ENCODE measurements at regions of chr10 and their contacts with region 1.

Region 1: DNA sequence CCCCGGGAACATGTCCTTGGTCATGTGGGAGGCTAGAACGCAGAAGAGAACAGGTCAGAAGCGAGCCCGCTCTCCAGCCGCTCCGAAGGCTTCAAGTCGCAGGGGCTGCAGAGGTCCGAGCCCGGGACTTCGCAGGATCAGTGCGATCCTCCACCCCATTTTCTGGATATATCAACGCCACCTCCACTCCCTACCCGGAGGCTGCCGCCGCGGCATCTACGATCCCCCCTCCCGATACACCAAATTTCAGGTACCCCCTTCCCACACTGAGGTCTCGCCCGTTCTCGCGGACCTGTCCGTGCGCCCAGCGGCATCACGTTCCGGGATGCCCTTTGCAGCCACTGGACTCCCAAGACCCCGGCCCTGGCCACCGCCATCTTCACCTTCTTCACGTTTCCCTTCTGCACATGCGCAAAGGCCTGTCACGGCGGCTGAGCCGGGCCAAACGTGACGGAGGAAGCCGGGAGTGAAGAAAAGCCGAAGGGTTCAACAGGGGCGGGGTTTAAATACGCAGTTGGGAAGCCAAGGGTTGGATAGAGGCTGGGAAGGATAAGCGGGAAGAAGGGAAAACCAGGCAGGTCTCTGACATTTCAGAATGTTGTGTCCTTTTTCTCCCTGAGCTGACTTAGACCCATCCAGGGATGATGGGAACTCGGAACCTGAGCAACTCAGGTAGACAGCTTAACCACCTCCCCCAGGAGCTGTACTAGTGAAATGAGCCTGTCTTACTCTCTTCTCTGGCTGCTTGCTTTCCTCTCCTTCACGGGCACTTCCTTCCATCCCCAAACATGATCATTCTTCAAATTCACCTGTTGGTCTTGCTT is at the start of gene NDUFB8:
- DNase-seq: peak; percentile 92
- ATAC-seq: peak; percentile 72
- H3K4me3 Mint-ChIP-seq: peak within 1 kb of the TSS; percentile 85
- H3K27ac Mint-ChIP-seq: peak within 1 kb of the TSS; percentile 95
- H3K4me1 Mint-ChIP-seq: peaks cover 32% of the 10 kb centered on the region
- H3K27me3 Mint-ChIP-seq: no peaks in the 10 kb centered on the region
- CTCF ChIP-seq: no peak
- total RNA-seq, gene NDUFB8: 365 to 384 TPM

Region 2: GRCh38 chr10:99659031-99659867 is 870.4 kb before region 1 on chr10 and contains the start of gene ENTPD7:
- CTCF ChIA-PET with region 1: no interaction called
- POLR2A ChIA-PET with region 1: no interaction called
- intact Hi-C with region 1: loop called (anchors 10 kb)
- DNase-seq: peak; percentile 96
- ATAC-seq: peak; percentile 99
- H3K4me3 Mint-ChIP-seq: peak within 1 kb of the TSS; percentile 84
- H3K27ac Mint-ChIP-seq: peak within 1 kb of the TSS; percentile 83
- H3K4me1 Mint-ChIP-seq: peaks cover 21% of the 10 kb centered on the region
- H3K27me3 Mint-ChIP-seq: peaks cover 8% of the 10 kb centered on the region
- CTCF ChIP-seq: peak; percentile 14
- total RNA-seq, gene ENTPD7: 1.9 to 2.2 TPM

Measured in activated CD8-positive, alpha-beta T cell treated with anti-CD3 and anti-CD28 coated beads for 36 hours (primary cell).